Dorsolateral prefrontal cortex (tissue), 120 donors: ENCODE measurements at regions of chr4 and their contacts with region 1.

Region 1: GRCh38 chr4:138870737-138871554 is 144.6 kb upstream of the NOCT start:
- DNase-seq: peak in 9 of 10 donors; percentile 42 to 82 (median 62)
- H3K4me3 ChIP-seq: peak overlapping the region in 5 of 59 donors; percentile 15 to 25 (median 22)
- H3K27ac ChIP-seq: peak overlapping the region in 12 of 59 donors; percentile 14 to 72 (median 45)
- H3K27me3 ChIP-seq: no peaks in the 10 kb centered on the region
- CTCF ChIP-seq: peak; percentile 80 to 98 (median 92)

Region 2: DNA sequence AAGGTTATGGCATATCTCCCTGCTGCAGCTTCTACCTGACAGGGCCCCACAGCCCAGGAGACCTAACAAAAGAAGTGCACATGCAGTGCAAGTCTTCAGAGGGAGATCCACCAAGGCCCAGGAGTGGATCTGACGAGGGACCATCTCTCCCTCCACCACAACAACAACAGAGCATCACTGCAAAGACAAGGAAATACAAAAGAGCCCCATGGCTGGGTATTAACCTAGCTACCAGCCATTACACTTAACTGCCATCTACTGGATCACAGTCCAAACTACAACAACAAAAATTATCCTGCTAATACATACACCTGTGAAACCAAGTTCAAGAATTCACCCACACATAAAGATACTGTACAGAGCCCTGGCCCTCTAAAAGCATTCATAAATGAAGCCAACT is 348.6 kb before region 1 on chr4:
- intact Hi-C with region 1: no loop called
- DNase-seq: no peak
- H3K4me3 ChIP-seq: no peak overlapping the region
- H3K27ac ChIP-seq: no peak overlapping the region
- H3K27me3 ChIP-seq: peaks cover 0 to 4% (median 0%) of the 10 kb centered on the region in 45 donors
- CTCF ChIP-seq: peak in 1 of 56 donors; percentile 13

Region 3: GRCh38 chr4:138919094-138919936 is 48.4 kb after region 1 on chr4:
- intact Hi-C with region 1: loop called in 1 of 2 experiments (anchors 5 kb)
- DNase-seq: peak; percentile 63 to 87 (median 82)
- H3K4me3 ChIP-seq: peak overlapping the region in 55 of 59 donors; percentile 0 to 57 (median 35)
- H3K27ac ChIP-seq: peak overlapping the region in 14 of 59 donors; percentile 2 to 68 (median 37)
- H3K27me3 ChIP-seq: no peaks in the 10 kb centered on the region
- CTCF ChIP-seq: peak; percentile 25 to 95 (median 78)